ENCODE measurements at regions of chr17 and their contacts with region 1.

Region 1: GRCh38 chr17:63434876-63435684 is 11.0 kb downstream of the CYB561 start:
- DNase-seq: peak in 1 of 2 donors; percentile 90
- H3K4me3 ChIP-seq: no peak overlapping the region
- CTCF ChIP-seq: no peak
- POLR2A ChIP-seq: no peak

Region 2: DNA sequence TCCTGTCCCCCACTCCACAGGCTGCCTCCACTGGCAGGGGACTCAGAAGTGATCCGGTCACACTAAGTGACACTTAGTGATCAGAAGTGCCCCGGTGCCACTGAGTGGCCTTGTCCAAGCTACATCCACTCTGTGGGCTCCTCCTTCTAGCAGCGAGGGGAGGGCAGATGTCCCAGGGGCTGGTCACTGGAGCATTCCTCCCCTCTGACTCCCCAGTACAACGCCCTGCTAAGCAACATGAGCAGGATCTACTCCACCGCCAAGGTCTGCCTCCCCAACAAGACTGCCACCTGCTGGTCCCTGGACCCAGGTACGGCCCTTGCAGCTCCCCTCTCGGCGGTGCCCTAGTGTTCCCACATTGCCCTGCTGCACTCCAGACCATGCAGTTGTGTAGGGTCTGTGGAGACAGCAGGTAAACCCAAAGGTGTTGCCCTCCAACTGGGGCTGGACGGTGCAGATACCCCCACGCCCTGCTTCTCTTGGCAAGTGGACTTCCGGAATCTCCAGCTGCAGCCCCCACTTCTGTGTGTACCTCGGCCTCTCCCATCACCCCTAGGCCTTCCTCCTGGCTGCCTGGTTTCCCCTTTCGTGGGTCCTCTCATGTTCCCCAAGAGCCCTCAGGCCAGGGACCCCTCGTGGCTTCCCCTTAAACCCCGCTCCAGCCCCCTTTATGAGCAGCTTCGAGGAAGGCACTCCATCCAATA is 43.9 kb after region 1 on chr17:
- intact Hi-C with region 1: loop called (anchors 5 kb)
- DNase-seq: peak; percentile 76 to 95
- H3K4me3 ChIP-seq: no peak overlapping the region
- CTCF ChIP-seq: peak in 1 of 3 donors; percentile 50
- POLR2A ChIP-seq: no peak

Measured in lower leg skin (tissue), 4 donors.